ENCODE measurements at regions of chr4 and their contacts with region 1.

Region 1: DNA sequence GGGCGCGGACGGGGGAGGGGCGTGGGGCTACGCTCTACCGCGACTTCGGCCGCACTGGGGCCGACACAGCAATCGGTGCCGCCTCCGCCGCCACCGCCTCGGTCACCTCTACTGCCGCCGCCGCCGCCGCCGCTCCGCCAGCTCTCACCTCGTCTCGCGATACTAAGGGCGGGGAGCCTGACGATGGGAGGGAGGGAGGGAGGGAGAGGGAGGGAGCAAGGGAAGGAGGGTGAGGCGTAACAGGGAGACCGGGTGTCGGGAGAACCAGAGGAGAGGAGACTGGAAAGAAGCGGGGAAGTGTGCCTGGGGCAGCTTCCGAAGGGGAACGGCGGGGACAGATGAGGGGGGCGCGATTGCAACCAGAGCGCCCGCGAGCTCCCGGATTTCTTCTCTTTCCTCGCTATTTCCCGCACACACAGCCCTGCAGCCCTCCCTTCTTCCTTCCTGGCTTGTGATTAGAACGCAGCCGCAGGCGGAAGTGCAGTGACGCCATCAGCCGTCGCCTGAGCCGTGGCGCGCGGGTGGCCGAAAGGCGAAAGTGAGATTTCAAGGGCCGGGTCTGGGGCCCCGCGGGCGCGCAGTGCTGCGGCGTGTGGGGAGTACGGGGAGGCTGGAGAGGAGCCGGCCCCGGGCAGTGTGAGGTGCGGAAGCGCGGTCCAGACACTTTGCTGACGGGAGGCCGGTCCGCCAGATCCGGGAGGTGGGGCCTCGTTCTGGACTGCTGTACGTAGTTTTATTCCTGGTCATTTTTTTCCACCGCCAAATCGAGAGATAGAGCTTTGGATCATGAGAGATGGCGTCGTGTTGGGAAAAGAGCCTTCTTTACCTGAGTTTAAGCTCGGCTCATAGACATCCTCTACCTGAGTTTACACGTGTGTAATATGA is at the start of gene ANKRD17:
- DNase-seq: peak; percentile 75

Region 2: GRCh38 chr4:73222466-73223257 is 36.3 kb before region 1 on chr4:
- CTCF ChIA-PET with region 1: no interaction called
- POLR2A ChIA-PET with region 1: interaction called, 12 read pairs
- DNase-seq: peak; percentile 73

Region 3: DNA sequence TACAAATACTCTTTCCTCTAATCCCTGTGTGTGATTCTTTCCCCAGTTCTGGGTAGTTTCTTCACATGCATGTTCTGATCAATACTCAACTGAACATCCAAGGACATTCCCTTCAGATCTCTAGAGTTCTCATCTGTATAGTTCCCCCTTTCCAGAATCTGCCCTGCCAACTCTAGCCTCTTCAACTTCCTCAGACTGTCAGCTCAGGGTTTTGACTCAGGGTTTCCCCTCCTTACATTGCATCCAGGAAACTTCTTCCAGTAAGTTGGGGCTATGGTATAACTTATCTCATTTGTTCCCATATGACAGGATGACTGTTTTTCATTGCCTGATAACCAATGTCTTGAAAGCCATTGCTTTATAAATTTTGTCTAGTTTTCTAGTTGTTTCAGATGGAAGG is 13.9 kb after region 1 on chr4:
- CTCF ChIA-PET with region 1: no interaction called
- POLR2A ChIA-PET with region 1: interaction called, 11 read pairs
- DNase-seq: no peak

Region 4: DNA sequence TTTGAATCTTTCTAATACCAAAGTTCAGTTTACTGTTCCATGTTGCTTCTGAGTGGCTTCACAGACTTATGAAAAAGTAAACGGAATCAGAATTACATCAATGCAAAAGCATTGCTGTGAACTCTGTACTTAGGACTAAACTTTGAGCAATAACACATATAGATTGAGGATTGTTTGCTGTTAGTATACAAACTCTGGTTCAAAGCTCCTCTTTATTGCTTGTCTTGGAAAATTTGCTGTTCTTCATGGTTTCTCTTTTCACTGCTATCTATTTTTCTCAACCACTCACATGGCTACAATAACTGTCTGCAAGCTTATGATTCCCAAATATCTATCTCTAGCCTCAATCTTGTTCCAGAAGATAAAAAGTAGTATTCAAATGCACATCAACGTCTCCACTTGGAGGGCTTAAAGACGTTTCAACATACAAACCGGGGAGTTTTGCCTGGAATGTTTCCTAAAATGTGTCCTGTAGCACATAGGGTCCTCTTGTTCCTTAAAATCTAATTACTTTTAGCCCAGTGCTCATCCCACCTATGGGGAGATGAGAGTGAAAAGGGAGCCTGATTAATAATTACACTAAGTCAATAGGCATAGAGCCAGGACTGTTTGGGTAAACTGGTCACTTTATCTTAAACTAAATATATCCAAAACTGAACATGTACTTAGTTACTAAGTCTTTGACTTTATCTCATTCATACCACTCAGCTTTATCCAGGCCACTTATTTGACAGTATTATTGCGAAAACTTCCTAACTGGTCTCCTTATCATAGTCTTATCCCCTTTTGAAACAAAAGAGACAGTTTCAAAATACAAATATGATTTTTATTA is 173.5 kb after region 1 on chr4:
- CTCF ChIA-PET with region 1: no interaction called
- POLR2A ChIA-PET with region 1: no interaction called
- DNase-seq: no peak